H1 (cell line): ENCODE measurements at regions of chr19 and their contacts with region 1.

Region 1: GRCh38 chr19:47243776-47244547 is 12.4 kb upstream of the CCDC9 start:
- DNase-seq: peak; percentile 91 to 99
- H3K4me3 ChIP-seq: peak overlapping the region; percentile 21 to 61 (median 34); a peak in 7 of 8 replicates
- H3K27ac ChIP-seq: peak overlapping the region; percentile 55; the same call in 1 of the 2 replicates
- H3K4me1 ChIP-seq: peaks cover 6 to 23% (median 18%) of the 10 kb centered on the region in 4 experiments
- H3K27me3 ChIP-seq: peaks cover 0 to 25% (median 23%) of the 10 kb centered on the region in 4 experiments; a peak in 6 of 7 replicates
- CTCF ChIP-seq: peak; percentile 87 to 98 (median 96)
- EP300 ChIP-seq: peak in 1 of 2 experiments; percentile 90; a peak in 2 of 3 replicates
- POLR2A ChIP-seq: no peak
- RAD21 ChIP-seq: peak; percentile 93 to 94

Region 2: GRCh38 chr19:47152224-47153017 is 91.5 kb before region 1 on chr19:
- CTCF ChIA-PET with region 1: interaction called, 17 read pairs
- POLR2A ChIA-PET with region 1: interaction called, 4 read pairs
- DNase-seq: no peak
- H3K4me3 ChIP-seq: no peak overlapping the region
- H3K27ac ChIP-seq: no peak overlapping the region
- H3K4me1 ChIP-seq: peaks cover under 1 to 8% (median 5%) of the 10 kb centered on the region in 4 experiments; a peak in 5 of 7 replicates
- H3K27me3 ChIP-seq: no peaks in the 10 kb centered on the region
- CTCF ChIP-seq: no peak
- EP300 ChIP-seq: no peak
- POLR2A ChIP-seq: no peak
- RAD21 ChIP-seq: no peak

Region 3: GRCh38 chr19:47203254-47203653 is 40.7 kb before region 1 on chr19:
- CTCF ChIA-PET with region 1: interaction called, 303 read pairs
- POLR2A ChIA-PET with region 1: interaction called, 8 read pairs
- DNase-seq: no peak
- H3K4me3 ChIP-seq: no peak overlapping the region
- H3K27ac ChIP-seq: no peak overlapping the region
- H3K4me1 ChIP-seq: no peaks in the 10 kb centered on the region; a peak in 1 of 7 replicates
- H3K27me3 ChIP-seq: no peaks in the 10 kb centered on the region
- CTCF ChIP-seq: no peak
- EP300 ChIP-seq: no peak
- POLR2A ChIP-seq: no peak
- RAD21 ChIP-seq: no peak

Region 4: DNA sequence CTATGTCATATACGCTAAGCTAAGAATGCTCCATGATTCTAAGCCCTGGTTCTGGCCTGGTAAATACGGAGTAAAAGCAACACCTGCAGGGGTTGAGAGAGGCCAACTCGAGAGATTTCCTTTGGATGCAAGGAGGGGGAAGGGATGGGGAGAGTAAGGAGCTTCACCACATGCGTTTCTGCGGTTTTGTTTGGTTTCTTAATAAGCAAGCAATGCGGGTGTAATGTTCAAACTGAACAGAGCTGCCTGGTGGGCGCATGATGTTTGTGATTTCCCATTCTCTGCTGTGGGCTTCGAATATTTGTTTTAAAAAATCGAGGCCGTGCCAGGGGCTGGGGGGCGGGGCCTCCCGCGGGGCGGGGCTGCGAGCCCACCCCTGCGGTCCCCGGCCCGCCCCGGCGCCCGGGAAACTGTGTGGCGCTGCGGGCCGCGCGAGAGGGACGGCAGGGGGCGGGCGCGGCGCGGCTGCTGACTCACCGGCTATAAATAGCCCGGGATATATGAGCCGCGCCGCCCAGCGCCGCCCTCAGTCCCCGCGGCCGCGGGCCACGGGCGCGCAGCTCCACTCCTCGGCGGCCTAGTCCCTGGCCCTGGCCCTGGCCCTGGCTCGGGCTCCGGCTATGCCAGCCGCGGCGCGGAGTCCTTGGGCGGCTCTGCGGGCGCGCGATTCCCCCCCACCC is 18.1 kb before region 1 on chr19:
- CTCF ChIA-PET with region 1: interaction called, 85 read pairs
- POLR2A ChIA-PET with region 1: interaction called, 148 read pairs
- DNase-seq: peak in 1 of 2 experiments; percentile 91
- H3K4me3 ChIP-seq: peak overlapping the region; percentile 36 to 99 (median 72); a peak in 7 of 8 replicates
- H3K27ac ChIP-seq: peak overlapping the region; percentile 82; the same call in 1 of the 2 replicates
- H3K4me1 ChIP-seq: peaks cover 5 to 32% (median 17%) of the 10 kb centered on the region in 4 experiments
- H3K27me3 ChIP-seq: no peaks in the 10 kb centered on the region; a peak in 1 of 7 replicates
- CTCF ChIP-seq: peak in 1 of 3 experiments; percentile 39; a peak in 2 of 4 replicates
- EP300 ChIP-seq: peak in 1 of 2 experiments; percentile 71; a peak in 2 of 3 replicates
- POLR2A ChIP-seq: peak; percentile 98 to 100
- RAD21 ChIP-seq: no peak

Region 5: DNA sequence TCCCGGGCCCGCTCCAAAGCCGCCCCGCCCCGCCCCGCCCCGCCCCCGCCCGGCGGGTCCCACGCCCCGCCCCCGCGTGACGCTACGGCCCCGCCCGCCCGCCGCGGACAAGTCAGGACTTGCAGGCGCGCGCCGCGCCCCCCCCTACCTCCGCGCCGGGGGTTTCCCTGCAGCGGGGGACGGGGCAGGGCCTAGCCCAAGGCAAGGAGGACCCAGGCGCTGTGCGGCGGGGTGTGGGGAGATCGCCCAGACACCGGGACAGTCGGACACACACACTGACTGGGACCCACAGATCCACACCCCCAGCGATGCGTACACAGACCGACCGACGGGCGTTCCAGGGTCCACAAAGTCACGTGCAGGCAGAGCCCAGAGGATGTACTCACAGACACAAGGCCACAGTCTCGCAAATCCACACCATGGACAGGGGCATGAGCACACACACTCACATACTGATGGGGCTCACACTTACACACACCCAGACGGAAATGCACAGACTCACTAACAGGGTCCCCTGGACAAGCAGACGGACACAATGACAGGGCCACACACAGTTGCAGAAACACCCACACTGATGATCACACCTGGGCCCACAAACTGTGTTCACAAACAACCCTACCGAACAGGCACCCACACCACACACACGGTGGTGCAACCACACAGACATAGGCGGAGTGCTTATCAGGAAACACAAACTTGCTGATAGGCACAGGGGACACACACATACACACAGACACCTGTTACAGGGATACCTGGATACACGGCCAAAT is 12.6 kb before region 1 on chr19:
- CTCF ChIA-PET with region 1: interaction called, 85 read pairs
- POLR2A ChIA-PET with region 1: interaction called, 148 read pairs
- DNase-seq: peak in 1 of 2 experiments; percentile 86
- H3K4me3 ChIP-seq: peak overlapping the region; percentile 50 to 99 (median 70)
- H3K27ac ChIP-seq: peak overlapping the region; percentile 94
- H3K4me1 ChIP-seq: peaks cover 12 to 36% (median 24%) of the 10 kb centered on the region in 4 experiments
- H3K27me3 ChIP-seq: no peaks in the 10 kb centered on the region; a peak in 1 of 7 replicates
- CTCF ChIP-seq: no peak
- EP300 ChIP-seq: 0 out of 3 replicates have a peak, but pooled peaks of 1 of the 2 experiments have one; percentile 64
- POLR2A ChIP-seq: peak in 1 of 2 experiments; percentile 71; a peak in 2 of 3 replicates
- RAD21 ChIP-seq: no peak

Region 6: DNA sequence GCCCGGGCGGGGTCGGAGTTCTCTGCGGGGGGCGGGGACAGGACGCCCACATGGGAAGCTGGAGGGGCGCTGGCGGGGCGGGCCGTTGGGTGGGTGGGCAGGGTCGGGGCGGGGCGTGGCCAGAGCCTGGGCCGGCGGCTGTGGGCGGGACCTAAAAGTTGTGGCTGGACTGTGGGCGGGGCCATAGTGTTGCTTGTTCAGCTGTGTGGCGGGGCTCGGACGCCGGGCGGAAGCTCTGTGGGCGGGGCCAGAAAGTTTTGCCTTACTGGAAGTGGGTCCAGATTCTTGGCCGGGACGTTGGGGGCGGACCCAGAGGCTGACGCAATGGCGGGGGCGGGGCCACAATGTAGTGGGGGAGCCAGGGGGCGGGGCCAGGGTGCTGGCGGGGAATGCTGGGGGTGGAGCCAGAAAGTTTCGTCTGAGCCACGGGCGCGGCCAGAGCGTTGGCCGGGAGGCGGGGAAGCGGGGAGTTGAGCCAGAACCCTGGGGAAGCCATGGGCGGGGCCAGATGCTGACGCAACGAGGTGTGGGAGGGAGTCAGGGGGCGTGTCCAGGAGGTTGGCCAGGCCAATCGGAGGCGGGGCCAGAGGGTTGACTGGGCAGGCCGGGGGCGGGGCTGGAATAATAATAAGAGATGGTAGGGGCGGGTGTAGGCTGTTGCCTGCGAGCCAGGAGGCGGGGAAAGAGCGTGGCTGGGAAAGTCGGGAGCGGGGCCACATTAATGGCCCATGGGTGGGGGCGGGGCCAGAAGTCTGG is 12.9 kb after region 1 on chr19:
- CTCF ChIA-PET with region 1: interaction called, 74 read pairs
- POLR2A ChIA-PET with region 1: interaction called, 50 read pairs
- DNase-seq: peak; percentile 98 to 100
- H3K4me3 ChIP-seq: peak overlapping the region in 2 of 4 experiments; percentile 78 to 92
- H3K27ac ChIP-seq: no peak overlapping the region
- H3K4me1 ChIP-seq: peaks cover 0 to 8% (median 6%) of the 10 kb centered on the region in 4 experiments; a peak in 6 of 7 replicates
- H3K27me3 ChIP-seq: no peaks in the 10 kb centered on the region
- CTCF ChIP-seq: no peak
- EP300 ChIP-seq: no peak
- POLR2A ChIP-seq: no peak
- RAD21 ChIP-seq: no peak